ENCODE measurements at regions of chr9 and their contacts with region 1.

Region 1: GRCh38 chr9:16726718-16727451 is 143.6 kb downstream of the BNC2 start:
- DNase-seq: peak; percentile 58 to 65
- H3K4me3 ChIP-seq: peak overlapping the region; percentile 77
- H3K27ac ChIP-seq: peak overlapping the region; percentile 92
- H3K4me1 ChIP-seq: peaks cover 27% of the 10 kb centered on the region
- H3K27me3 ChIP-seq: no peaks in the 10 kb centered on the region
- CTCF ChIP-seq: no peak

Region 2: DNA sequence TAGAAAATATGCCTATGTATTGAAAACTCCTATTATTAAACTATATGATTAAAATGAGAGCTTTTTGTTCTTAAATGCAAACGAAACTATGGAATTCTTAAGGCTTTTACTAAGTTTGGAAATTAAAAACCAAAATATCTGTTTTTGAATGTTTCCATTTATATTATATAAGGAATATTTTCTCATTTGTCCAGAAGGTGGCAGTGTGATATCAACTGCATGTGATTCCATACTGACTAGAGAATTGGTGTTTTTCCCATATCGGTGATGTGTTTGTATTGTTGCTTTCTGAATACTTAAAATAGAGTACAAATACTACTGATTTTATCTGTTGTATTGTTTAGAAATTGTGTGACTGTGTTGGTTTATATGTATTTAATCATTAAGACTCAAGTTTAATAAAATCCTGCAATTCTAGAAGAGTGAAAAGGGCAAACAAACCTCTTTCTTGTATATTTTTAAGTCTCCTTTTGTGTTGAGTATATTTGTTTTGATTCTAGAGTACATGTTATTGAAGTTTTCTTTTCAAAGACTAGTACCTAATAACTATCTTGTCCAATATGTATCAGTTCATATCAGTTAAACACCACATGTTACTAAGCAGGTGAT is 853.2 kb before region 1 on chr9:
- CTCF ChIA-PET with region 1: no interaction called
- POLR2A ChIA-PET with region 1: no interaction called
- intact Hi-C with region 1: loop called (anchors 10 kb)
- DNase-seq: no peak
- H3K4me3 ChIP-seq: no peak overlapping the region
- H3K27ac ChIP-seq: peak overlapping the region; percentile 59
- H3K4me1 ChIP-seq: peaks cover 9% of the 10 kb centered on the region; the same call in 1 of the 2 replicates
- H3K27me3 ChIP-seq: no peaks in the 10 kb centered on the region
- CTCF ChIP-seq: peak; percentile 75

Region 3: GRCh38 chr9:16202914-16203728 is 523.8 kb before region 1 on chr9:
- CTCF ChIA-PET with region 1: no interaction called
- POLR2A ChIA-PET with region 1: interaction called, 13 read pairs
- intact Hi-C with region 1: no loop called
- DNase-seq: peak; percentile 39 to 49
- H3K4me3 ChIP-seq: no peak overlapping the region
- H3K27ac ChIP-seq: no peak overlapping the region
- H3K4me1 ChIP-seq: no peaks in the 10 kb centered on the region; the same call in 1 of the 2 replicates
- H3K27me3 ChIP-seq: no peaks in the 10 kb centered on the region
- CTCF ChIP-seq: no peak

Region 4: GRCh38 chr9:16425562-16426231 is 301.2 kb before region 1 on chr9:
- CTCF ChIA-PET with region 1: no interaction called
- POLR2A ChIA-PET with region 1: interaction called, 3 read pairs
- intact Hi-C with region 1: loop called (anchors 10 kb)
- DNase-seq: no peak
- H3K4me3 ChIP-seq: no peak overlapping the region
- H3K27ac ChIP-seq: no peak overlapping the region
- H3K4me1 ChIP-seq: no peaks in the 10 kb centered on the region
- H3K27me3 ChIP-seq: no peaks in the 10 kb centered on the region
- CTCF ChIP-seq: no peak

Measured in PC-9 (cell line).